Sigmoid colon (tissue), 7 donors: ENCODE measurements at regions of chr7 and their contacts with region 1.

Region 1: DNA sequence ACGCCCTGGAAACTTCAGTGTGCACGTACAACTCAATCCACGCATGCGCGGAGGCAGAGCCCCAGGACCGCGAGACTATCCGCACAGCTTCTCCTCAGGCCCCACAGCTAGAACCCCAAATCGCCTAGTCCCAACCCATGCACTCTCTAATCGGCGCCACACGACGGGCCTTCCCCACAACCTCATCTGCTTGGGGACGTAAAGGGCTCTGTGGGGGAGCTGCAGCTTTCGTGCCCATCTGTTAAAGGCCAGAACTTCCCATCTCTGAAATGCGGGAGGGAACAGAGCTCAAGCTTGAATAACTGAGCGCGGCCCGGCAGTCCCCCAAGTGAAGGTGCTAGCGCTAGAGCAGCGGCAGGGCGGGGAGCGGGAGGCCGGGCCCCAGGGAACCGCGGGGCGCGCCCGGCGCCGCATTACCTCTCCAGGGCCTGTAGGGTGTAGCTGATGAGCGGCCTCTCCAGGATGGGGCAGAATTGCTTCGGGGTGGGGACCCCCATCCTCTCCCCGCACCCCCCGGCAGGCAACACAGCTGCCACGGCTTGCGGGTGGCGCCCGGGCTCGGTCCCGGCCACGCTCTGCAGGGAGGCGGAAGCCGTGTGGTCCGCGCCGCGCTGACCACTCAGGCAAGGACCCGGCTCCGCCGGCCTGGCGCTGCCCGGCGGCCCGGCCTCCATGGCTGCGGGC is 547 bp downstream of the CRPPA start:
- DNase-seq: peak; percentile 94
- H3K4me3 ChIP-seq: peak overlapping the region; percentile 47 to 71 (median 54)
- H3K27ac ChIP-seq: peak overlapping the region; percentile 89 to 97 (median 96)
- H3K4me1 ChIP-seq: peaks cover 0 to 29% (median 21%) of the 10 kb centered on the region in 4 donors
- H3K27me3 ChIP-seq: no peaks in the 10 kb centered on the region
- CTCF ChIP-seq: peak in 3 of 4 experiments; percentile 39 to 53 (median 45)
- EP300 ChIP-seq: no peak
- POLR2A ChIP-seq: peak; percentile 86 to 95

Region 2: DNA sequence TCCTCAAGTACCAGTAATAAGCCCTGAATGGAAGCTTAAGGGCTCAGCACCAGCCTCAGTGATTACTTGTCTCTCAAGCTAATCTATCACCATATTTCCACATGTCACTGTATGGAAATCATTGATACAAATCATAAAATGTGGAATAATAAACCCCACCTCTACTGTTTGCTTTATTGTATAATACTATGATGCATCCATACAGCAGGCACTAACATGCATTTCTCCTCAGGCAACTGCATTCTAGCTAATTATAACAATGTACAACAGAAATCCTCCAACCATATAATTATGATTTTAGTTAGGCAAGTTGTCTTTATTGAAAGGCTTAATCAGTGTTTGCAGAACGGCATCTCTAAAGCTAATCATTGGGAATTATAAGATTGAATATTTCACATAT is 25.7 kb before region 1 on chr7:
- intact Hi-C with region 1: no loop called
- DNase-seq: no peak
- H3K4me3 ChIP-seq: no peak overlapping the region
- H3K27ac ChIP-seq: no peak overlapping the region
- H3K4me1 ChIP-seq: no peaks in the 10 kb centered on the region
- H3K27me3 ChIP-seq: no peaks in the 10 kb centered on the region
- CTCF ChIP-seq: no peak
- EP300 ChIP-seq: no peak
- POLR2A ChIP-seq: no peak

Region 3: GRCh38 chr7:16645593-16646471 is 225.0 kb after region 1 on chr7 and contains the starts of genes ANKMY2 and BZW2:
- intact Hi-C with region 1: loop called (anchors 10 kb)
- DNase-seq: peak; percentile 98
- H3K4me3 ChIP-seq: peak within 1 kb of the TSS; percentile 75 to 99 (median 88)
- H3K27ac ChIP-seq: peak within 1 kb of the TSS; percentile 92 to 95 (median 94)
- H3K4me1 ChIP-seq: peaks cover 0 to 44% (median 30%) of the 10 kb centered on the region in 4 donors
- H3K27me3 ChIP-seq: no peaks in the 10 kb centered on the region
- CTCF ChIP-seq: no peak
- EP300 ChIP-seq: no peak
- POLR2A ChIP-seq: peak; percentile 92 to 95
- total RNA-seq, gene ANKMY2: 11.9 to 21.1 (median 14.3) TPM
- total RNA-seq, gene BZW2: 49.7 to 65.4 (median 58.9) TPM

Region 4: GRCh38 chr7:16975712-16976111 is 554.9 kb after region 1 on chr7:
- intact Hi-C with region 1: no loop called
- DNase-seq: no peak
- H3K4me3 ChIP-seq: no peak overlapping the region
- H3K27ac ChIP-seq: no peak overlapping the region
- H3K4me1 ChIP-seq: no peaks in the 10 kb centered on the region
- H3K27me3 ChIP-seq: no peaks in the 10 kb centered on the region
- CTCF ChIP-seq: no peak
- EP300 ChIP-seq: no peak
- POLR2A ChIP-seq: no peak